ENCODE measurements at regions of chr2 and their contacts with region 1.

Region 1: GRCh38 chr2:174341286-174341994 is 6.7 kb downstream of the SP9 start:
- DNase-seq: peak; percentile 73
- H3K4me3 ChIP-seq: peak overlapping the region; percentile 12 to 42 (median 16)
- H3K27ac ChIP-seq: no peak overlapping the region
- H3K4me1 ChIP-seq: peaks cover 39% of the 10 kb centered on the region
- H3K27me3 ChIP-seq: peaks cover 51% of the 10 kb centered on the region
- CTCF ChIP-seq: peak; percentile 96 to 99

Region 2: GRCh38 chr2:173448938-173449471 is 892.4 kb before region 1 on chr2:
- CTCF ChIA-PET with region 1: interaction called, 3 read pairs
- dilution Hi-C with region 1: no loop called
- in situ Hi-C with region 1: no loop called
- intact Hi-C with region 1: loop called (anchors 5 kb)
- DNase-seq: peak; percentile 74
- H3K4me3 ChIP-seq: peak overlapping the region in 1 of 3 experiments; percentile 20
- H3K27ac ChIP-seq: no peak overlapping the region
- H3K4me1 ChIP-seq: no peaks in the 10 kb centered on the region
- H3K27me3 ChIP-seq: no peaks in the 10 kb centered on the region
- CTCF ChIP-seq: peak; percentile 81 to 90

Region 3: GRCh38 chr2:173749315-173749714 is 592.1 kb before region 1 on chr2:
- CTCF ChIA-PET with region 1: no interaction called
- dilution Hi-C with region 1: no loop called
- in situ Hi-C with region 1: no loop called
- intact Hi-C with region 1: loop called (anchors 2 kb)
- DNase-seq: peak; percentile 6
- H3K4me3 ChIP-seq: no peak overlapping the region
- H3K27ac ChIP-seq: no peak overlapping the region
- H3K4me1 ChIP-seq: no peaks in the 10 kb centered on the region
- H3K27me3 ChIP-seq: no peaks in the 10 kb centered on the region
- CTCF ChIP-seq: peak in 1 of 2 donors; percentile 52

Region 4: GRCh38 chr2:173965329-173966025 is 376.0 kb before region 1 on chr2 and contains the start of gene SP3:
- CTCF ChIA-PET with region 1: no interaction called
- dilution Hi-C with region 1: no loop called
- in situ Hi-C with region 1: no loop called
- intact Hi-C with region 1: loop called (anchors 2 kb)
- DNase-seq: peak; percentile 97
- H3K4me3 ChIP-seq: peak within 1 kb of the TSS; percentile 73 to 96 (median 94)
- H3K27ac ChIP-seq: peak within 1 kb of the TSS; percentile 81
- H3K4me1 ChIP-seq: peaks cover 19% of the 10 kb centered on the region
- H3K27me3 ChIP-seq: no peaks in the 10 kb centered on the region
- CTCF ChIP-seq: no peak
- total RNA-seq, gene SP3: 64.1 to 79.5 TPM

Region 5: GRCh38 chr2:174138161-174138560 is 203.3 kb before region 1 on chr2:
- CTCF ChIA-PET with region 1: interaction called, 4 read pairs
- dilution Hi-C with region 1: no loop called
- in situ Hi-C with region 1: no loop called
- intact Hi-C with region 1: loop called (anchors 1 kb)
- DNase-seq: no peak
- H3K4me3 ChIP-seq: no peak overlapping the region
- H3K27ac ChIP-seq: no peak overlapping the region
- H3K4me1 ChIP-seq: no peaks in the 10 kb centered on the region
- H3K27me3 ChIP-seq: no peaks in the 10 kb centered on the region
- CTCF ChIP-seq: peak; percentile 46 to 47

Region 6: GRCh38 chr2:174248187-174248997 is 93.0 kb before region 1 on chr2 and contains the start of gene OLA1:
- CTCF ChIA-PET with region 1: no interaction called
- dilution Hi-C with region 1: no loop called
- in situ Hi-C with region 1: no loop called
- intact Hi-C with region 1: loop called (anchors 1 kb)
- DNase-seq: peak; percentile 96
- H3K4me3 ChIP-seq: peak within 1 kb of the TSS; percentile 67 to 81 (median 73)
- H3K27ac ChIP-seq: peak within 1 kb of the TSS; percentile 79
- H3K4me1 ChIP-seq: peaks cover 21% of the 10 kb centered on the region
- H3K27me3 ChIP-seq: no peaks in the 10 kb centered on the region
- CTCF ChIP-seq: peak in 1 of 2 donors; percentile 9
- total RNA-seq, gene OLA1: 104 to 150 TPM